ENCODE measurements at regions of chr6 and their contacts with region 1.

Region 1: DNA sequence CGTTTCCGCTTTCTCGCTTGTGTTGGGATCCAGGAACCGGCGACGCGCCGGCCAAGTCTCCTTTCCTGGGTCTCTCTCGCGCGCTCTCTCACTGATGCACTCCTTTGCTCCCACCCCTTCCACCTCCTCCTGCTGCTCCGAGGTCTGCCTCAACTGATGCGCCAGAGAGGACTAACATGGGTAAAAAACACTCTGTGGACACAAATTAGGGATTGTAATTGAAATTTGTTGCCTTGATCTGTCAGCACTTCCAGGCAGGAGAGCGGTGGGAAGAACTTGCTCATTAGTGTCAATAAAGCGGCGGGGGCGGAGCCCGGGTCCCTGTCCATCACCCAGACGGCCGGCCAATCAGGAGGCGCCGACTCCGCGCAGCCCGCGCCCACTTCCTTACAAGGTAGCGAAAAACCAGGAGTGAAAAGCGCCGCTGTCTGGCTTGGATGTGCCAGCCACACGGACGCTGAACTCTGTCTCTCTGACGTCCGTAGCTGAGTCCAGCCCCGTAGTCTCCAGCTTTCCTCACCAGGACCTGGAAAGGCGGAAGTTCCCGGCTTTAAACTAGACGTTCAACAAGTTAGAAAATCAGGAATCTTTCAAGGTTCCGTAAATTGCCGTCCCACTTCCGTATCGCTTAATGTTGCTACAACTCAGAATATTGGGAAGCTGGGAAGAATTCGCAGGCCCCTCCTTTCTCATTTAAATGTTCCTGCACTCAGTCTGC is at the start of gene TBX18:
- DNase-seq: peak; percentile 97 to 98
- ATAC-seq: peak; percentile 90
- H3K4me3 ChIP-seq: peak within 1 kb of the TSS; percentile 75 to 94
- H3K27ac ChIP-seq: peak within 1 kb of the TSS; percentile 90 to 99
- H3K4me1 ChIP-seq: no peaks in the 10 kb centered on the region
- H3K27me3 ChIP-seq: no peaks in the 10 kb centered on the region
- total RNA-seq, gene TBX18: 58.6 to 75.2 TPM

Region 2: GRCh38 chr6:84515067-84515466 is 249.4 kb before region 1 on chr6:
- intact Hi-C with region 1: loop called (anchors 5 to 10 kb)
- DNase-seq: no peak
- ATAC-seq: peak; percentile 60
- H3K4me3 ChIP-seq: peak overlapping the region in 1 of 2 donors; percentile 79
- H3K27ac ChIP-seq: peak overlapping the region; percentile 47 to 76
- H3K4me1 ChIP-seq: peaks cover 3 to 4% of the 10 kb centered on the region in 2 donors
- H3K27me3 ChIP-seq: no peaks in the 10 kb centered on the region

Region 3: GRCh38 chr6:84575264-84575663 is 189.2 kb before region 1 on chr6:
- intact Hi-C with region 1: loop called in 1 of 2 experiments (anchors 10 kb)
- DNase-seq: no peak
- ATAC-seq: no peak
- H3K4me3 ChIP-seq: no peak overlapping the region
- H3K27ac ChIP-seq: no peak overlapping the region
- H3K4me1 ChIP-seq: no peaks in the 10 kb centered on the region
- H3K27me3 ChIP-seq: no peaks in the 10 kb centered on the region

Region 4: DNA sequence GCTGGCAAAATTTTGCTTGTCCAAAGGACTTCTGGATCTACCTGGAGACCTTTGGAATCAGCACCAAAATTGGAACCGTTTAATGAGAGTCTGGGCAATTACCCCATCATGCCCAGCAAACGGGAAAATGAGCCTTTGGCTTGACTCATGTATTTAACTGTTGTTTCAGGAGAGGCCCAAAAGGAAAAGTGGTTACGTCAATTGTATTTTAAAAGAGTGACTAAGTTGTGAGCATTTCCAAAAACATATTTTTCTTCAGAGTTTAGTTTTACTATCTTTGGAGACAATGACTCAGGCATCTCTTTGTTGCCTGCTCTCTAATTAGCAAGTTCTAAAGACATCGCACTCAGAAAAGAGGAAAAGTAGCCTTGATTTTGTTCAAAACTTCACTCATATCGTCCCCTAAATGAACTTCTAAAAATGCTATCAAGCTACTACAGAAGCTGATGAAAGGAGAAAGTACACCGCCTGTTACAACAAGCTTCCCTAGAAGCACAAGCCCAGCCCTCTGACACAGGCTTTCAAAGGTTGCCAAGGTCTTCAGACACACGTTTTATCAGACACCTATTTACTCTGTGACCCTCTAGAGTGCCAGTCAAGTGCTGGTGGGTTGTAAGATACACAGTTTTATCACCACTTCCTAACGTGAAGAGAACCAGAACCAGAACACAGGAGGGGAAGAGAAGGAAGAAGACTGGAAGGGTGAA is 146.3 kb before region 1 on chr6:
- intact Hi-C with region 1: loop called in 1 of 2 experiments (anchors 5 kb)
- DNase-seq: no peak
- ATAC-seq: peak; percentile 81
- H3K4me3 ChIP-seq: peak overlapping the region in 1 of 2 donors; percentile 33
- H3K27ac ChIP-seq: peak overlapping the region; percentile 93 to 99
- H3K4me1 ChIP-seq: peaks cover 0 to 2% of the 10 kb centered on the region in 2 donors
- H3K27me3 ChIP-seq: no peaks in the 10 kb centered on the region

Region 5: DNA sequence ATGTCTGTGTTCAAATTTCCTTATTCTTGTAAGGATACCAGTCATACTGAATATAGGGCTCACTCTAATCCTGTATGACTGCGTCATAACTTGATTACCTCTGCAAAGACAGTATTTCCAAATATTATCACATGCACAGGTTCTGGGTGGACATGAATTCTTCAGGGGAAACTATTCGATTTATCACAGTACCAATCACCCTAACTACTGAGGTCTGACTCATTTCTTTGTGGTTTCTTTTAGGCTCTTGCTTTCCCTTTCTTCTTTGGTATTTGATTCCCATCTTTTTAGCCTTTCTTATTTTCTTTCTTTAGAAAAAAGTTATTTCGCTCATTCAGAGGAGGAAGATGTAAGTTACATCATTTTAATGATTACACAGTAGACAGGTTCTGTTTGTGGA is 40.2 kb after region 1 on chr6:
- intact Hi-C with region 1: no loop called
- DNase-seq: no peak
- ATAC-seq: no peak
- H3K4me3 ChIP-seq: no peak overlapping the region
- H3K27ac ChIP-seq: no peak overlapping the region
- H3K4me1 ChIP-seq: no peaks in the 10 kb centered on the region
- H3K27me3 ChIP-seq: no peaks in the 10 kb centered on the region

Region 6: GRCh38 chr6:84872996-84873723 is 108.7 kb after region 1 on chr6:
- intact Hi-C with region 1: no loop called
- DNase-seq: no peak
- ATAC-seq: no peak
- H3K4me3 ChIP-seq: no peak overlapping the region
- H3K27ac ChIP-seq: no peak overlapping the region
- H3K4me1 ChIP-seq: no peaks in the 10 kb centered on the region
- H3K27me3 ChIP-seq: no peaks in the 10 kb centered on the region

Region 7: GRCh38 chr6:84892671-84893070 is 128.2 kb after region 1 on chr6:
- intact Hi-C with region 1: no loop called
- DNase-seq: no peak
- ATAC-seq: no peak
- H3K4me3 ChIP-seq: no peak overlapping the region
- H3K27ac ChIP-seq: no peak overlapping the region
- H3K4me1 ChIP-seq: no peaks in the 10 kb centered on the region
- H3K27me3 ChIP-seq: no peaks in the 10 kb centered on the region

Region 8: DNA sequence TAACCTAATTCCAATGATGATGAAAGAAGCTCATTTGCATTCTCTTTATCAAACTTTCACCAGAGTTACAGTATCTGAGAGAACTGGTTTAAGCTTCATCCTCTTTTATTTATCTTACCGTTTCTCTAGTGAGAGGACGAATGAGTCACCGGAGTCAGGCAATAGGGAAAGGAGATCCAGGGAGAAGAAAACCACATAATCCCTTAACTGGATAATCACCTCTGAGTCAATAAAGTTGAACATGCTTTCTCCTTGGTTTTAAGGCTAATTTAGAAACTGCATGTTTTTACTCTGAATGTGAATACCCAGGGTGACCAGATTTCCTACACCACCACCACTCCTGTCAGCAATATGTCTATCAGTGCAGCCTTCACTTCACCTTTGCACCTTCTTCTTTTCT is 313.6 kb after region 1 on chr6:
- intact Hi-C with region 1: no loop called
- DNase-seq: no peak
- ATAC-seq: no peak
- H3K4me3 ChIP-seq: no peak overlapping the region
- H3K27ac ChIP-seq: no peak overlapping the region
- H3K4me1 ChIP-seq: no peaks in the 10 kb centered on the region
- H3K27me3 ChIP-seq: no peaks in the 10 kb centered on the region